A549 (cell line): ENCODE measurements at regions of chr2 and their contacts with region 1.

Region 1: GRCh38 chr2:24123195-24123921 is at the starts of genes FAM228B and PFN4:
- DNase-seq: peak; percentile 89 to 91
- ATAC-seq: peak; percentile 95 to 98
- H3K4me3 ChIP-seq: peak within 1 kb of the TSS; percentile 72
- H3K27ac ChIP-seq: peak within 1 kb of the TSS; percentile 94 to 95
- H3K4me1 ChIP-seq: peaks cover 21% of the 10 kb centered on the region; the same call in 2 of the 3 replicates
- CTCF ChIP-seq: no peak
- EP300 ChIP-seq: no peak; a peak in 1 of 5 replicates
- POLR2A ChIP-seq: peak; percentile 55
- RAD21 ChIP-seq: no peak
- polyA plus RNA-seq, gene FAM228B: 7.6 and 8.2 TPM in 2 replicates
- polyA plus RNA-seq, gene PFN4: 2.0 and 2.3 TPM in 2 replicates

Region 2: DNA sequence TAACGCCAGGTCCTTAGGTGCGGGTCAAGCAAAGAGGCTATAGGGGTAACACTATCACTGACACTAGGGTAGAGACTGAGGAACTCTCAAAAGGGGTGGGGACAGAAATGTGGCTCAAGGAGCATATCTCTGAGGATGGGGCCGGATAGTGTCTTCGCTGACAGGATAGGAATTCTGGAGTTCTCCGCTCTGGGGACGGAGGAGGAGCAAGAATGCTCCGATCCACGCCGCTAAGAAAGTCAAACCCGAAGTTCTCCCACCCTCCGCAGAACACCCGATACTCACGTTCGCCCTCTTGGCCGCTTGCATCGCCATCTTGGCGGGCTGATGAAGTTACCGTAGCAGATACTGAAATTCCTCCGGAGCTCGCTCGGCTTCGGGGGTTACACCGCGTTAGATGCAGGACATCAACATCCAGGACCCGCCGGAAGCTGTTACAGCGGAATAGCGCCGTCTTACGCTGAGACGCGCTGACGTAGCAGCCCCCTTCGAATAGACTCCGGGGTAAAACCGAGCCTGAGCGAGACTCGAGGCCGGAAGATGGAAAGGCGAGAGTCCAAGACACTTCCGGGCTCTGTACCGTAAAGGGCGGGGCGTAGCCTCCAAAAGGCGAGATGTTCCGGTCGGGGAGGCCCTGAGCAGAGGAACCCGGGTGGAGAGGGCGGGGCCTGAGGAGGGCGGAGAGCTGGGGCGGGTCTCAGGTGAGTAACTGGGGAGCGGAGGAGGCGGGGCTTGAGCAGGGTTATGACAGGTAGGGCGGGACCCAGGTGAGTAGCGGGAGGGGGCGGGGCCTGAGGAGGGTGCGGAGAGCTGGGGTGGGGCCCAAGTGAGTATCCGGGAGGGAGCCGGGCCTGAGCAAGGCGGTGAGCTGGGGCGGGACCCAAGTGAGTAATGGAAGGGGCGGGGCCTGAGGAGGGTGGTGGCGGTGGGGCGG is 47.2 kb before region 1 on chr2 and contains the start of gene SF3B6:
- CTCF ChIA-PET with region 1: no interaction called
- POLR2A ChIA-PET with region 1: interaction called, 15 read pairs
- DNase-seq: peak; percentile 92 to 99
- ATAC-seq: peak; percentile 91 to 94
- H3K4me3 ChIP-seq: peak within 1 kb of the TSS; percentile 82
- H3K27ac ChIP-seq: peak within 1 kb of the TSS; percentile 84 to 85
- H3K4me1 ChIP-seq: peaks cover 19% of the 10 kb centered on the region
- CTCF ChIP-seq: no peak
- EP300 ChIP-seq: no peak
- POLR2A ChIP-seq: peak; percentile 88
- RAD21 ChIP-seq: peak; percentile 28 to 31; a peak in 3 of 5 replicates
- polyA plus RNA-seq, gene SF3B6: 296 and 315 TPM in 2 replicates

Region 3: DNA sequence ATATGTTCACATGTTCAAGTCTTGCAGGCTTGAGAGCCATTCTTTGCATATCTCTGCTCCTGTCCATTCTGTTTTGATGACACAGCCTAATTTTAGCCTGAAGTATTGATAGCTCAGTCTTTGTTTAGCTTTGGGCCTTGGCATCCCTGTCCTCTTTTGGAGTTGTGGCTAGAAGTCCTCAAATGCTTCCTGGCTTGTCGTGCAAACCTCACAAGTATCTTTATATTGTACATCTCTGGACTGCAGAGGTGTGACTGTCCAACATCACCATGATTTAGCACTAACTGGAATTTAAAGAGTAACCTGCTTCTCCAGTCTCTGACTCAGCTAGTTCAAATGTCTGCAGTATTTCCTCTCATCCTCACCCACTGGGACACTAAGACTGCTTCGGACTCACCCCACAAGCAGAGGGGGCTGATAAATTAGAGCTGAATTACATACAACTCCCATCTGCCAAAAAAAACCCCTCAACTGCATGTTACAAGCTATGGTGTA is 11.9 kb before region 1 on chr2:
- CTCF ChIA-PET with region 1: interaction called, 12 read pairs
- POLR2A ChIA-PET with region 1: interaction called, 5 read pairs
- DNase-seq: peak; percentile 48 to 85
- ATAC-seq: peak; percentile 91 to 93
- H3K4me3 ChIP-seq: no peak overlapping the region
- H3K27ac ChIP-seq: peak overlapping the region; percentile 69 to 85
- H3K4me1 ChIP-seq: peaks cover 34% of the 10 kb centered on the region
- CTCF ChIP-seq: no peak
- EP300 ChIP-seq: peak in 1 of 2 experiments; percentile 27; a peak in 1 of 5 replicates
- POLR2A ChIP-seq: no peak
- RAD21 ChIP-seq: no peak

Region 4: DNA sequence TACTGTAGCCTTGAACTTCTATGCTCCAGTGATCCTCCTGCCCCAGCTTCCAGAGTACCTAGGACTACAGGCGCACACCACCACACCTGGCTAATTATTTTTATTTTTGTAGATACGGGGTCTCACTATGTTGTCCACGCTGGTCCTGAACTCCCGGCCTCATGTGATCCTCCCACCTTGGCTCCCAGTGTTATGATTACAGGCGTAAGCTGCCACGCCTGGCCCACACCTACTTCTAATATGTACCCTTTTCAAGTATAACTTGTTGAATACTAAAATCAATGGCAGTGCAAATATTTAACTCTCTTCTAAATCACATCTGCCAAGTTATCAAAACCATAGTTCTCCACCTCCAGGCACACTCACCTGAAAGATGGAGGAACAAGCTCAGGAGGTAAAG is 178.2 kb after region 1 on chr2:
- CTCF ChIA-PET with region 1: no interaction called
- POLR2A ChIA-PET with region 1: no interaction called
- DNase-seq: no peak
- ATAC-seq: no peak
- H3K4me3 ChIP-seq: no peak overlapping the region
- H3K27ac ChIP-seq: no peak overlapping the region
- H3K4me1 ChIP-seq: no peaks in the 10 kb centered on the region
- CTCF ChIP-seq: no peak
- EP300 ChIP-seq: no peak
- POLR2A ChIP-seq: no peak
- RAD21 ChIP-seq: no peak